AG04449 (cell line): ENCODE measurements at regions of chr1 and their contacts with region 1.

Region 1: DNA sequence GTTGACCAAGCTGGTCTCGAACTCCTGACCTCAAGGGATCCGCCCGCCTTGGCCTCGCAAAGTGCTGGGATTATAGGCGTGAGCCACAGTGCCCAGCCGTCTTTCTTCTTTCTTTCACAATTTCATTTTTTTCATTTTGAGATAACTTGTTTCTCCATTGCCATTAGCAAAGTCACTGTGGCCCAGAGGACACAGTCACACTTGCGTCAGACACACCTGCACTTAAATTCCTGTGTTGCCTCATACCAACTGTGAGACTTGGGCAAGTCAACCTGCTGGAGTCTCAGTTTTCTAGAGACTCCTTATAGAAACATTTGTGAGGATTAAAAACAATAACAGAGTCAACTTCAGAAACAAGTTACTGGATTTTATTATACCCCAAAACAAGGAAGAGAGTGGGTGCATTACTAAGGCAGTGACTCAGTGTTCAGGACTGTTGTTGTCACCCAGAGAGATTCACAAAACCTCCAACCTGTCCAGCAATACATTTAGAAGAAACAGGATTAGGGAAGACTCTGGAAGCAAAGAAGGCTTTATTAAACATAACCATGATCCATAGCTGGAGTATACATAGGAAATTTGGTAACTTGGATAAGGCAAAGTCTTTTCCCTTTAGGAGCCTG is 2.6 kb downstream of the TEDDM1 start:
- DNase-seq: no peak
- H3K4me3 ChIP-seq: no peak overlapping the region
- CTCF ChIP-seq: no peak

Region 2: DNA sequence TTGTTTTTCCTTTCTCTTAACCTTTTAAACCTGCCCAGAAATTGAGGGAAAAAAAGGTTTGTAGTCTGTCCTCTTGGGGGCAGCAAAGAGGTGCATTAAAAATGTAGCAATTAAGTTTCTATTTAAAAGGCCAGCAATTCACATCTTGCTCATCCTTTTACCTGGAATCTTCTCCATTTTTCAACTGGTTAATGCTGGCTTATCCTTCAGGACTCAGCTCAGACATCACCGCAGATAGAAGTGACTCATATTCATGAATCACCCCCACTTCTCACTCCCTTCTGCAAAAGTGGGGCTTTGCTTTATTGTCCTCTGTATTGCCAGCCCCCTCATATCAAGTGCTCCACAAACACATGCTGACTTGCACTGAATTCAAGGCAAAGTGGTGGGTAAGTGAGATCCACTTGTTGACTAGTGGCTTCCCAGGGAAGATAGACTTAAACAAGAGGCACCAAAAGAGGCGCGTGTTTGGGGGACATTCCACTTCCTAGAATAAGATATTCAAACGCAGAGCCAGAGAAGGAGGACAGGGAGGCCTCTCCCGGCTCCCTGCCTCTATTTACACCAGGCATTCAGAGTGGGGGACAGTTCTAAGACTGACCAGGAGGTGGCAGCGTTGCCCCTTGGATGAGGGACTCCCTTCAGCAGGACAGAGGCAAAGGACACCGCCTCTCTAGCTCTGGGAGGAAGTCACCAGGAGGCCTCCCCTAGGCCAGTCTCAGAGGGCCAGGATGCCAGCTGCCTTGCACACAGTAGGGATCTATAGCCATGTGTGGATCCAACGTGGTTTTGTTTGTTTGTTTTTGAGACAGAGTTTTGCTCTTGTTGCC is 313.2 kb before region 1 on chr1:
- CTCF ChIA-PET with region 1: interaction called, 205 read pairs
- POLR2A ChIA-PET with region 1: no interaction called
- DNase-seq: no peak
- H3K4me3 ChIP-seq: no peak overlapping the region
- CTCF ChIP-seq: peak; percentile 80

Region 3: GRCh38 chr1:182092336-182092735 is 305.5 kb before region 1 on chr1:
- CTCF ChIA-PET with region 1: interaction called, 205 read pairs
- POLR2A ChIA-PET with region 1: no interaction called
- DNase-seq: no peak
- H3K4me3 ChIP-seq: no peak overlapping the region
- CTCF ChIP-seq: no peak

Region 4: GRCh38 chr1:182135946-182136345 is 261.9 kb before region 1 on chr1:
- CTCF ChIA-PET with region 1: interaction called, 504 read pairs
- POLR2A ChIA-PET with region 1: interaction called, 3 read pairs
- DNase-seq: no peak
- H3K4me3 ChIP-seq: no peak overlapping the region
- CTCF ChIP-seq: no peak

Region 5: GRCh38 chr1:182149411-182149965 is 248.4 kb before region 1 on chr1:
- CTCF ChIA-PET with region 1: interaction called, 504 read pairs
- POLR2A ChIA-PET with region 1: no interaction called
- DNase-seq: no peak
- H3K4me3 ChIP-seq: no peak overlapping the region
- CTCF ChIP-seq: no peak

Region 6: DNA sequence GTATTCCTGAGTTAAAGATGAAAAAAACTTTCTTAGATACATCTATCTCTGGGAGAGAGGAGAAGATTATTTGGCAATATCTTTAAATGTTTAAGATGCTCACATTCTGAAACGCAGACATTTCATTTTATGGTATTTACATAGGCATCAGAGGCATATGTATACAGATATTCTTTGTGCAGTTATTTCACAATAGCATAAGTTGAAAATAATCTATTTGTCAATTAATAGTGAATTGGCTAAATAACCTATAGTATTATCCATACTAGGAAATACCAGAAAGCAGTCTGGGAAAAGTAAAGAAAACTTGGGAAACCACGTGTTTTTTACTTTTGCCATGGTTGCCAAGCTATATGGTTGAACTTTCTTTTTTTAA is 42.2 kb before region 1 on chr1:
- CTCF ChIA-PET with region 1: no interaction called
- POLR2A ChIA-PET with region 1: no interaction called
- DNase-seq: no peak
- H3K4me3 ChIP-seq: no peak overlapping the region
- CTCF ChIP-seq: no peak

Region 7: GRCh38 chr1:182376936-182377574 is 20.8 kb before region 1 on chr1:
- CTCF ChIA-PET with region 1: interaction called, 14 read pairs
- POLR2A ChIA-PET with region 1: no interaction called
- DNase-seq: no peak
- H3K4me3 ChIP-seq: no peak overlapping the region
- CTCF ChIP-seq: no peak

Region 8: GRCh38 chr1:182381962-182382819 is 15.7 kb before region 1 on chr1:
- CTCF ChIA-PET with region 1: interaction called, 14 read pairs
- POLR2A ChIA-PET with region 1: no interaction called
- DNase-seq: no peak
- H3K4me3 ChIP-seq: no peak overlapping the region
- CTCF ChIP-seq: no peak